ENCODE measurements at regions of chr5 and their contacts with region 1.

Region 1: GRCh38 chr5:135990528-135991255 is 35.9 kb upstream of the LECT2 start:
- DNase-seq: no peak
- ATAC-seq: no peak
- H3K4me3 ChIP-seq: no peak overlapping the region
- H3K27ac ChIP-seq: no peak overlapping the region
- H3K4me1 ChIP-seq: no peaks in the 10 kb centered on the region
- H3K27me3 ChIP-seq: no peaks in the 10 kb centered on the region
- CTCF ChIP-seq: no peak
- POLR2A ChIP-seq: no peak

Region 2: DNA sequence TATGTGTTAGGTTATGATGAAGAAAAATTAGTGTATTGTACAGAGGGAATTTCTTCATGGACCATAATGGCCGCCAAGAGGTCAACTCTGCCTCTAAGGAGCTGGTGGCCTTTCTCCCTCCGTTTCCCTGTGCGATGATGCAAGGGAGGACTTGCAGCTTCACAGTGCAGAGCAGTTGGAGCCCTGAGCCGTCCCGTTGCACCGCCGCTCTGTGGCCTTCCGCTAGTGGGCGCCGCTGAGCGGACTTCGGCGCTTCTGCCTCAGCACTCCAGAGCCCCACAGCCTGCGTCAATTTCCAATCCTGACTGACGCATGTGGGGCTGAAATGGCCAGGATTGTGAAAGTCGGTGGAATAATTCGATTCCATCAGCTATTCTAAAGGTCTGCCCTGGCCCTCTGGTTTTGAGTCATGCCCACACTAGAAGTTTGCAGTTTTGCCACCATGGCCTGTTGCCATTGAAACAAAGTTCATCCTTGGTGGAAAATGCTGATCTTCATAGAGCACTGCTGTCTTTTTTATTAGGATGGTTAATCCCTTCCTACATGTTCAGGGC is 13.2 kb before region 1 on chr5:
- in situ Hi-C with region 1: no loop called
- intact Hi-C with region 1: loop called (anchors 1 kb)
- DNase-seq: peak in 1 of 2 donors; percentile 46
- ATAC-seq: peak in 1 of 2 donors; percentile 49
- H3K4me3 ChIP-seq: no peak overlapping the region
- H3K27ac ChIP-seq: no peak overlapping the region
- H3K4me1 ChIP-seq: peaks cover 20% of the 10 kb centered on the region in 2 donors
- H3K27me3 ChIP-seq: no peaks in the 10 kb centered on the region
- CTCF ChIP-seq: peak in 4 of 5 experiments; percentile 7 to 44 (median 36)
- POLR2A ChIP-seq: no peak

Region 3: GRCh38 chr5:136123236-136123768 is 132.6 kb after region 1 on chr5:
- in situ Hi-C with region 1: no loop called
- intact Hi-C with region 1: no loop called
- DNase-seq: no peak
- ATAC-seq: no peak
- H3K4me3 ChIP-seq: no peak overlapping the region
- H3K27ac ChIP-seq: no peak overlapping the region
- H3K4me1 ChIP-seq: no peaks in the 10 kb centered on the region
- H3K27me3 ChIP-seq: no peaks in the 10 kb centered on the region
- CTCF ChIP-seq: no peak
- POLR2A ChIP-seq: no peak

Measured in gastrocnemius medialis (tissue), 4 donors.